HEK293 (cell line): ENCODE measurements at regions of chr10 and their contacts with region 1.

Region 1: DNA sequence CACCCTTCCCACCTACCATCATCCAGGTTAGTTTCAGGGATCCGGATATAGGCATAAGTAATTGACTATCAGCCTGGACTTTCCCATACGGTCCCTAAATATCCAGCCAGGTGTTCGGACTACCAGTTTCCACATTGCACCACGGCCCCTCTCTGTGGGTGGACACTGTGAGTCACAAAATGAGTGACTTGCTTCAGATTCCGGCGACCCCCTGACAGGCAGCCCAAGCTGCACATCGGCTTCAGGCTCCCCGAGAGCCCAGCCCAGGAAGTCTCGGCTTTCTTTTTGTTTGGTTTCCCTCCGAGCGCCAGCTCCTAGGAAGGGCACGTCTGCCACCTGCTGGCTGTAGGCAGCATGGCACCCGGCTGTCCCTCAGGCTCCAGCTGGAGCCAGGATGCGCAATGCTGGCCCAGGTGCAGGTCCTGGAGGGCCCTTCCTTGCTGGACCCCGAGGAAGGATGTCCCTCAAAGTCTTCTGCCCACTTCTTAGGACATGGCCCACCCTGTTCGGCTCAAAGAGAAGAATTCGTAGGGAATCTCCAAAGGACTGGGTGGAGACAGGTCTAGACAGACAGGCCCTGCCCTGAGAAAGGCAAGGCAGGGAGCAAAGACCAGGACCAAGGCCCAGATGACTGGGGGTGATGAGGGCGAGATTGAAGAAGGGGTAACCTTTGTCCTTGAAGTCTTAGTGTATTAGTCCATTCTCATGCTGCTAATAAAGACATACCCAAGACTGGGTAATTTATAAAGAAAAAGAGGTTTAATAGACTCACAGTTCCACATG is 10.6 kb downstream of the HABP2 start:
- H3K4me3 ChIP-seq: peak overlapping the region; percentile 21
- H3K27ac ChIP-seq: no peak overlapping the region
- H3K4me1 ChIP-seq: peaks cover 2% of the 10 kb centered on the region; the same call in 1 of the 2 replicates
- CTCF ChIP-seq: peak; percentile 93

Region 2: DNA sequence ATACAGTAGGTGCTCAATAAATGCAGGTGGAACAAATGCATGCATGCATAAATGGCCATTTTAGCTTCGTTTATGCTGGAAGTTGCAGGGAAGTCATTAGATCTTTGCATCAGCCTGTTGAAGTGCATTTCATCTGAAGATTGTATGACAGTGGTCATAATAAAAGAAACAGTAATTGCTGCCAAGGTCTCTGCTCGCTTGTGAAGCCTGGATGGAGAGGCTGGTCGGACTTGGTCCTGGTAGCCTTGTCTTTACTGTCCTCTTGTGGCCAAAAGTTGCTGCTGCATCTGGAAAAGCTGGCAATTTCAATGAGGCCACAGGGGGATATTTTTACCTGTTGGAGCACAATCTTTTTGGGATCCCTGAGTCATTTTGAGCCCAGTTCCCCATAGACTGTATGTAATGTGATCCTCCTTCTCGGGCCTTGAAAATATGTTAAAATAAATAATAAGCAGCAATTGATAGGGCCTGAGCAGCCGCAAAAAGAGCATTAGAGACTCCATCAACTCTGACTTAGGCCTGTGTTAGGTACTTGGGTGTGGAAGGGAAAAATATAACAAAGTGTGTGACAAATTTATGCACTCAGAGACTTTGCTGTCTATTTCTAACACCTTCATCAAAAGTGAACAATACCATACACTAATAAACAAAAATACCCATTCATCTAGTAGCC is 42.2 kb before region 1 on chr10:
- CTCF ChIA-PET with region 1: interaction called, 11 read pairs
- POLR2A ChIA-PET with region 1: no interaction called
- H3K4me3 ChIP-seq: no peak overlapping the region
- H3K27ac ChIP-seq: no peak overlapping the region
- H3K4me1 ChIP-seq: peaks cover 6% of the 10 kb centered on the region
- CTCF ChIP-seq: peak; percentile 89

Region 3: GRCh38 chr10:113552701-113553100 is 10.8 kb before region 1 on chr10 and contains the start of gene HABP2:
- CTCF ChIA-PET with region 1: interaction called, 11 read pairs
- POLR2A ChIA-PET with region 1: no interaction called
- H3K4me3 ChIP-seq: no peak within 1 kb of the TSS
- H3K27ac ChIP-seq: no peak within 1 kb of the TSS
- H3K4me1 ChIP-seq: no peaks in the 10 kb centered on the region
- CTCF ChIP-seq: no peak

Region 4: GRCh38 chr10:113576852-113577251 is 13.4 kb after region 1 on chr10:
- CTCF ChIA-PET with region 1: interaction called, 12 read pairs
- POLR2A ChIA-PET with region 1: interaction called, 5 read pairs
- H3K4me3 ChIP-seq: no peak overlapping the region
- H3K27ac ChIP-seq: no peak overlapping the region
- H3K4me1 ChIP-seq: peaks cover 2% of the 10 kb centered on the region; the same call in 1 of the 2 replicates
- CTCF ChIP-seq: no peak